ENCODE measurements at regions of chr22 and their contacts with region 1.

Region 1: DNA sequence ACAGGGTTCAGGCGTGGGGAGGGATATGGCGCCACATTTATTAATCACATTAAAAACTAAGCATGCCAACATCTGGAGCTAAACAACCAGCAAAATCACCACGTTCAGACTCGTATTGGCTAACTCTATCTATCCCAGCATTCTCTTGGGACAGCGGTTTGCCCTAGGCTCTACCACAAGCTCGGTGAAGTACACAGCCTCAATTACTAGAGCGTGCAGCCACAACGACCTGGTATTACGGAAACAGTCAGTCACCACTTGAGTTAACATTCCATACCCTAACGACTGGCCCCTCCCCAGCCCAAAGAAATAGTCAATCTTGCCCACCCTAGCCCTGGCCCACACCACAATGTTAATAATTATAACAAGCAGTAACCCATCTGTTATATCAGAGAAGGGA is 32.1 kb downstream of the APOL5 start:
- DNase-seq: no peak
- H3K4me3 ChIP-seq: no peak overlapping the region
- CTCF ChIP-seq: no peak
- POLR2A ChIP-seq: no peak

Region 2: GRCh38 chr22:37148742-37149665 is 1399.2 kb after region 1 on chr22:
- intact Hi-C with region 1: loop called (anchors 10 kb)
- DNase-seq: no peak
- H3K4me3 ChIP-seq: no peak overlapping the region
- CTCF ChIP-seq: no peak
- POLR2A ChIP-seq: no peak